Activated T-helper 1 cell treated with anti-CD3 and anti-CD28 coated beads, Interleukin-12 subunit alpha, Interleukin-12 subunit beta, Interleukin-2, Interleukin-4 antibody, amounts not matched to agents 30 ng/mL and 10 ng/mL and 1 ng/mL, durations not matched to agents 14 hours and 24 hours and 36 hours (primary cell): ENCODE measurements at regions of chr3 and their contacts with region 1.

Region 1: DNA sequence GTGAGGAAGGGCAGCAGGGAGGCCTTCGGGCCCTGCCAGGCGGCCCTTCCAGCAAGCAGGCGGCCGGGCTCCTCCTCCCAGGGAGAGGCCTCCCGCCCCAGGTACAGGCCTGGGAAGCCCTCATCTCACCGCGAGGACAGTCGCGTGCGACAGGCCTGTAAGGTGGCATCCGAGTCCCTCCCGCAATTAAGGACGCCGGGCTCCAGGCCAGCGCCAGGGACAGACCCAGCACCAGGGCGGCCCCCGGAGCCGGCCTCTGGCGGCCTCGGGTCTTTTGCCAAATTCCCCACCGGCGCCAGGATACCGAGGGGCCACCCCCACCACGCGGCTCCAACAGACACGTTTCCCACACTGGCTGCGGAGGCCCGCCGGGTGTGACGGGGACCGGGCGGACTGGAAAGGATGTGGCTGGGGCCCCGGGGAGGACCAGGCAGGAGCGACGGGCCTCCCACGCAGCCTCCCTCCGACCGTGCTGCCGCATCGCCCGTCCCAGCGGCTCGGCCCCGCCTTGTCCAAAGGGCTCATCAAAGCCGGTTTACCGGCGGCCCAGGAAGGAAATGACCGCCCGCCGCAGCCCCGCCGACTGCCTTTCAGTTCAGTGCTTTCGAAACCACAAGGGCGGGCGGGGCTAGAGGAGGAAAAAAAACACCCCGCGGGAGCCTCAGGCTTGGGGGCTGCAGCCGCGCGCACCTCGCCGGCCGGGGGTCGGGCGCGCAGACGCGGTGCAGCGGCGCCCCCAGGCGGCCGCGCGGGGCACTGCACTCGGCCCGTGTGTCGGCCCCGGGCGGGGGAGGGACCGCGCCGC is 11.3 kb downstream of the XXYLT1 start:
- DNase-seq: peak; percentile 76
- H3K4me3 Mint-ChIP-seq: peak overlapping the region; percentile 15
- H3K27ac Mint-ChIP-seq: no peak overlapping the region
- H3K4me1 Mint-ChIP-seq: peaks cover 24% of the 10 kb centered on the region
- H3K27me3 Mint-ChIP-seq: no peaks in the 10 kb centered on the region

Region 2: GRCh38 chr3:195001961-195002861 is 257.5 kb before region 1 on chr3:
- intact Hi-C with region 1: loop called (anchors 10 kb)
- DNase-seq: no peak
- H3K4me3 Mint-ChIP-seq: no peak overlapping the region
- H3K27ac Mint-ChIP-seq: no peak overlapping the region
- H3K4me1 Mint-ChIP-seq: no peaks in the 10 kb centered on the region
- H3K27me3 Mint-ChIP-seq: peaks cover 6% of the 10 kb centered on the region

Region 3: GRCh38 chr3:195106418-195106906 is 153.2 kb before region 1 on chr3:
- intact Hi-C with region 1: loop called (anchors 5 kb)
- DNase-seq: peak; percentile 47
- H3K4me3 Mint-ChIP-seq: no peak overlapping the region
- H3K27ac Mint-ChIP-seq: no peak overlapping the region
- H3K4me1 Mint-ChIP-seq: peaks cover 9% of the 10 kb centered on the region
- H3K27me3 Mint-ChIP-seq: no peaks in the 10 kb centered on the region

Region 4: DNA sequence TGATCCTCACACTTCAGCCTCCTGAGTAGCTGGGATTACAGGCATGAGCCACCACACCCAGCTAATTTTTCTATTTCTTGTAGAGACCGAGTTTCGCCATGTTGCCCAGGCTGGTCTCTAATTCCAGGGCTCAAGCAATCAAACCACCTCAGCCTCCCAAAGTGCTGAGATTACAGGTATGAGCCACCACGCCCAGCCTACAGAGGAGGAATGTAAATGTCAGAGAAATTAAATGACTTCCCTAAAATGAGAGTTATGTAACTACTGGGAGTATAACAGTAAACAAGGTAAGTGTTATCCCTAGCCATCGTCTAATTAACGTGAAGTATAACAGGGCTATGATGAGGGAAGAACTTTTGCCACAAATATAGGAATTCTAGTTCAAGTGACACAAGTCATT is 117.6 kb after region 1 on chr3:
- intact Hi-C with region 1: no loop called
- DNase-seq: no peak
- H3K4me3 Mint-ChIP-seq: no peak overlapping the region
- H3K27ac Mint-ChIP-seq: no peak overlapping the region
- H3K4me1 Mint-ChIP-seq: no peaks in the 10 kb centered on the region
- H3K27me3 Mint-ChIP-seq: no peaks in the 10 kb centered on the region